CD14-positive monocyte (primary cell): ENCODE measurements at regions of chr20 and their contacts with region 1.

Region 1: DNA sequence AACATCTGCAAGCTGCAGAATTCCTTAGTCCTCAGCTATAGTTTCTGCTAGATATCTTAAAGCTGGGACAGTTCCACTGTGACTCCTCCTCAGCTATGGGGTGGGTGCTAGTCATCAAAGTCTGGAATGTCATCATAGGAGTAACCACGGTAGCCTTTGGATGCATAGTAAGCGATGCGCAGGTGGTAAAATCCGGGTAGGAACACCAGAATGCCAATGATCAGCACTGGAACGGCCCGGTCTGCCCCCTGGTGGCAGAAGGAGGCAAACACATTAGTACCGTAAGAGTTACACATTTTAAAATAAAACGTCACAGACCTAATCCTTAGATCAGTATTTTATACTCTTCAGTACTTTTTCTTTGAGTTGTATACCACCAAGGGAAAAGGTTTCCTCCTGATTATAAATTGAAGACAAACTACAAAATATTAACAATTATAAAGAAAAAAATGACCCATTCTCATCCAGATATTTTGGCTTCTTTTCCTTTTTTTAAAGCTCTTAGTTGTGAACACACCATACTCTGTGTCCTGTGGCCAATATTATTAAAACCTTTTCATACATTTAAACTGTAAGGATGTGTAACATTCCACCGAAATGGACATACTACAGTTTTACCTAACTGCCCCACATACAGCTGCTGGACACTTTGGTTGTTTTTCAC is 18.9 kb downstream of the PCNA start:
- DNase-seq: peak; percentile 66 to 83 (median 79)
- H3K4me3 ChIP-seq: no peak overlapping the region
- H3K4me3 Mint-ChIP-seq: no peak overlapping the region
- H3K27ac ChIP-seq: peak overlapping the region in 1 of 2 donors; percentile 65
- H3K27ac Mint-ChIP-seq: peak overlapping the region; percentile 35 to 91 (median 70)
- H3K4me1 ChIP-seq: peaks cover 0 to 2% of the 10 kb centered on the region in 2 donors
- H3K4me1 Mint-ChIP-seq: peaks cover 7% of the 10 kb centered on the region
- H3K27me3 ChIP-seq: no peaks in the 10 kb centered on the region
- H3K27me3 Mint-ChIP-seq: no peaks in the 10 kb centered on the region
- CTCF ChIP-seq: peak; percentile 94

Region 2: GRCh38 chr20:5001174-5002076 is 99.4 kb before region 1 on chr20 and contains the start of gene SLC23A2:
- intact Hi-C with region 1: loop called (anchors 5 kb)
- DNase-seq: peak; percentile 22 to 25 (median 25)
- H3K4me3 ChIP-seq: peak within 1 kb of the TSS; percentile 65 to 93 (median 76)
- H3K4me3 Mint-ChIP-seq: peak within 1 kb of the TSS; percentile 97 to 99
- H3K27ac ChIP-seq: peak within 1 kb of the TSS; percentile 44 to 78
- H3K27ac Mint-ChIP-seq: peak within 1 kb of the TSS; percentile 66 to 93 (median 86)
- H3K4me1 ChIP-seq: peaks cover 34 to 38% of the 10 kb centered on the region in 2 donors
- H3K4me1 Mint-ChIP-seq: peaks cover 39% of the 10 kb centered on the region
- H3K27me3 ChIP-seq: no peaks in the 10 kb centered on the region
- H3K27me3 Mint-ChIP-seq: peaks cover 0 to 7% (median 0%) of the 10 kb centered on the region in 3 donors
- CTCF ChIP-seq: no peak
- polyA plus RNA-seq, gene SLC23A2: 3.3 to 28.4 (median 6.4) TPM

Region 3: GRCh38 chr20:5056801-5057599 is 43.8 kb before region 1 on chr20:
- intact Hi-C with region 1: loop called (anchors 5 kb)
- DNase-seq: peak; percentile 88 to 98 (median 97)
- H3K4me3 ChIP-seq: peak overlapping the region in 1 of 3 experiments; percentile 3
- H3K4me3 Mint-ChIP-seq: peak overlapping the region in 1 of 2 donors; percentile 62
- H3K27ac ChIP-seq: peak overlapping the region; percentile 81 to 86
- H3K27ac Mint-ChIP-seq: peak overlapping the region; percentile 91 to 97 (median 96)
- H3K4me1 ChIP-seq: peaks cover 26 to 29% of the 10 kb centered on the region in 2 donors
- H3K4me1 Mint-ChIP-seq: peaks cover 25% of the 10 kb centered on the region
- H3K27me3 ChIP-seq: no peaks in the 10 kb centered on the region
- H3K27me3 Mint-ChIP-seq: peaks cover 0 to 10% (median 2%) of the 10 kb centered on the region in 3 donors
- CTCF ChIP-seq: peak; percentile 73

Region 4: GRCh38 chr20:5222919-5223634 is 122.3 kb after region 1 on chr20:
- intact Hi-C with region 1: no loop called
- DNase-seq: peak; percentile 40 to 54 (median 49)
- H3K4me3 ChIP-seq: no peak overlapping the region
- H3K4me3 Mint-ChIP-seq: no peak overlapping the region
- H3K27ac ChIP-seq: no peak overlapping the region
- H3K27ac Mint-ChIP-seq: no peak overlapping the region
- H3K4me1 ChIP-seq: peaks cover 9 to 12% of the 10 kb centered on the region in 2 donors
- H3K4me1 Mint-ChIP-seq: peaks cover 18% of the 10 kb centered on the region
- H3K27me3 ChIP-seq: peaks cover 0 to 3% of the 10 kb centered on the region in 2 donors
- H3K27me3 Mint-ChIP-seq: peaks cover 0 to 14% (median 8%) of the 10 kb centered on the region in 3 donors
- CTCF ChIP-seq: peak; percentile 92